Heart right ventricle (tissue), 16 donors: ENCODE measurements at regions of chr4 and their contacts with region 1.

Region 1: DNA sequence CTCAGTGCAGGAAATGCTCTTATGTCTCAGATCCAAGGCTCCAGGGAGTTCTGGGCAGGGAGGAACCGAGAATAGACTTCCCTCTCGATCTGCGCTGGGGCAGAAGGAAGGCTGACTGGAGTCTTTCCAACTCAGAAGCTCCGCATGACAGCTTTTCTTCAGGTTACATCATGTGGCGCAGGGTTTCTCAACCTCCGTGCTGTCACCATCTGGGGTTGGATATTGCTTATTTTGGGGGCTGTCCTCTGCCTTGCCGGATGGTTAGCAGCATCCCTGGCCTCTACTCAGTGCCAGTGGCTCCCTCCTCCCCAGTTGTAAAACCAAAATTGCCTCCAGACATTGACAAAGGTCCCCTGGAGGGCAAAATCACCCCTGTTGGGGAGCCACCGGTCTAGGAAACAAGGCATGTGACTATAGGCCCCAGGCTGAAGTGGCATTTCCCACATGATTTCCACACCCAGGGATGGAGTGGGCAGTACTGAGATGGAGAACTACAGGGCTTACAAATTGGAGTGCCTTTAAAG is 21.4 kb downstream of the REELD1 start:
- DNase-seq: no peak
- ATAC-seq: peak; percentile 53 to 70 (median 61)
- H3K4me3 ChIP-seq: no peak overlapping the region
- H3K27ac ChIP-seq: peak overlapping the region in 8 of 10 donors; percentile 7 to 66 (median 38)
- H3K4me1 ChIP-seq: peaks cover 0 to 38% (median 17%) of the 10 kb centered on the region in 9 donors
- H3K27me3 ChIP-seq: no peaks in the 10 kb centered on the region
- CTCF ChIP-seq: no peak

Region 2: GRCh38 chr4:146142783-146143182 is 92.9 kb before region 1 on chr4:
- intact Hi-C with region 1: no loop called
- DNase-seq: no peak
- ATAC-seq: no peak
- H3K4me3 ChIP-seq: no peak overlapping the region
- H3K27ac ChIP-seq: no peak overlapping the region
- H3K4me1 ChIP-seq: no peaks in the 10 kb centered on the region
- H3K27me3 ChIP-seq: peaks cover 0 to 7% (median 0%) of the 10 kb centered on the region in 7 donors
- CTCF ChIP-seq: no peak

Region 3: GRCh38 chr4:146191766-146192458 is 43.8 kb before region 1 on chr4:
- intact Hi-C with region 1: loop called in 2 of 10 experiments (anchors 2 to 5 kb)
- DNase-seq: peak in 1 of 2 donors; percentile 17
- ATAC-seq: peak; percentile 67 to 98 (median 90)
- H3K4me3 ChIP-seq: no peak overlapping the region
- H3K27ac ChIP-seq: peak overlapping the region in 8 of 10 donors; percentile 12 to 70 (median 40)
- H3K4me1 ChIP-seq: peaks cover 0 to 31% (median 19%) of the 10 kb centered on the region in 9 donors
- H3K27me3 ChIP-seq: no peaks in the 10 kb centered on the region
- CTCF ChIP-seq: peak in 8 of 9 donors; percentile 6 to 46 (median 24)

Region 4: DNA sequence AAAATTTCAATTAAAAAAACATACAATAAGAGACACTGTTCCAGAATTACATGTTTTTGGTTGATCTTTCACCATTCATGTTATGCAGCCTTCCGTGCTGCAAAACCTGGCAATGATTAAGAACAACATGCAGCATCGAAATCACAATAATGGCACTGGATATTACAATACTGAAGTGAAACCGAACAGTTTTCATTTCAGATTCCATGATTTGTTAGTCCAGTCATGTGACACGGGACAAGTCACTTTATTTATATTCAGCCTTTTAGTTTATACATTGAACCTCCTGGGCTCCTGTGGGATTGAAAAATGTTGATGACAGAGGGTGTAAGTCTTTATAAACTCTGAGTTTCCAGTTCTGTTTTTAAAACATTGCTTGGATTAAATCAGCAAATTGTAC is 852.4 kb after region 1 on chr4:
- intact Hi-C with region 1: loop called in 1 of 10 experiments (anchors 10 kb)
- DNase-seq: no peak
- ATAC-seq: no peak
- H3K4me3 ChIP-seq: no peak overlapping the region
- H3K27ac ChIP-seq: no peak overlapping the region
- H3K4me1 ChIP-seq: no peaks in the 10 kb centered on the region
- H3K27me3 ChIP-seq: peaks cover 0 to 5% (median 0%) of the 10 kb centered on the region in 7 donors
- CTCF ChIP-seq: no peak